ENCODE measurements at regions of chr14 and their contacts with region 1.

Region 1: GRCh38 chr14:22822571-22823098 is 7.1 kb upstream of the MRPL52 start:
- DNase-seq: peak; percentile 78
- ATAC-seq: peak; percentile 83
- H3K4me3 Mint-ChIP-seq: peak overlapping the region; percentile 59
- H3K27ac Mint-ChIP-seq: no peak overlapping the region
- H3K4me1 Mint-ChIP-seq: peaks cover 27% of the 10 kb centered on the region
- H3K27me3 Mint-ChIP-seq: peaks cover 13% of the 10 kb centered on the region
- CTCF ChIP-seq: peak; percentile 95

Region 2: DNA sequence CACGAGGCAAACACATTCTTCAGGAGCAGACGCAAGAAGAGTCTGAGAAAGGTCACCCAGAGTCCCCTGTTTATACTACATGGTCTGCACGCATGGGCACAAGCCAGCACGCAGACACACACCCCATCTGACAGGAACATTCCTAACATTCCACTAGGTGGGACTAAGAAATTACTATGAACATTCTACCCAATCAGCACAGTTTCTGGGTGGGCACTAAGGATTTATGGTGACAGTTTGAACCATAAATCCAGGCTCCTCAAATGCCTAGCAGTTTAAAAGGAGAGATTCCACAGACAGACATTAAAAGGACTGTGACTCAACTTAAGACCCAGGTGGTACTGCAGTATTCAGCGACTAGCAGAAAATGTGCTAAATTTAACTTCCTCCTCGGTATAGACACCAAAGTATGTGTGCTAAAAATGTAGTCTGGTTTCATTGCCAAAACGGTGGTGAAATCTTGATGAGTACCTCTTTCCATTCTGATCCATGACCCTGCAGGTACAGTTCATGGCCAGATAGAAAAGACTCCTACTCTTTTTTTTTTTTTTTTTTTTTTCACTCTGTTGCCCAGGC is 208.3 kb before region 1 on chr14:
- CTCF ChIA-PET with region 1: no interaction called
- POLR2A ChIA-PET with region 1: no interaction called
- intact Hi-C with region 1: no loop called
- DNase-seq: no peak
- ATAC-seq: no peak
- H3K4me3 Mint-ChIP-seq: no peak overlapping the region
- H3K27ac Mint-ChIP-seq: no peak overlapping the region
- H3K4me1 Mint-ChIP-seq: peaks cover 5% of the 10 kb centered on the region
- H3K27me3 Mint-ChIP-seq: no peaks in the 10 kb centered on the region
- CTCF ChIP-seq: no peak

Region 3: DNA sequence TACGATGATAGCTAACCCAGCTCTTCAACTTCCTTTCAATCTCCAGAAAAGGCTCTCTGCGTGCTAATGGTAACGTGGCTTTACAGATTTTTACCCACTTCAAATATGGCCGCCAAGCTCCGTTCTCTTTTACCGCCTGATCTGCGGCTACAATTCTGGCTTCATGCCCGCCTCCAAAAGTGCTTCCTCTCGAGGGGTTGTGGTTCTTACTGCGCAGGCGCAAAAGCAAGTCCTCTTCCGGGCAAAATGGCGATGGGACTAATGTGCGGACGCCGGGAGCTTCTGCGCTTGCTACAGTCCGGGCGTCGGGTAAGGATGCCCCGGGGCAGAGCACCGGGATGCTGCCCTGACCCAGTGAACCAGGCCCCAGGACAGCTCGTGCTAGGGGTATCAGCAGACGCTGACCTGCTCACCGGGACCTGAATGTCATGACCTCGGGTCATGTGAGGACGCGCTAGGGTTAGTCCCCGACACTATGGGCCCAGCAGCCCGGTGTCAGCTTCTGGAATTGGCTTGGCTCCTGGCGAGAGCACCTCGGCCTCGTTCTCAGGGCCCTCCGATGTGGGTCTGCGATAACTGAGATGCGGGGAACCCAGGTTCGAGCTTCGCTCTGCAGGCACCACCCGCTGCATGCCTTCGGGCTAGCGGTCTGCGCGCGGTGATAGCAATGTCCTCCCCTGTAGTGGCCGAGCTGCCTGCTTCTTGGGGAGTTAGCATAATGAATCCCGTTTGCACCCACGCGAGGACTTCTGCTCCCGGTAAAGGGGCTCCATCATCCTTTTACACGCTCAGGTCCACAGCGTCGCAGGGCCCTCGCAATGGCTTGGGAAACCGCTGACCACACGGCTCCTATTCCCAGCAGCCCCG is 55.9 kb before region 1 on chr14 and contains the start of gene OXA1L:
- CTCF ChIA-PET with region 1: interaction called, 15 read pairs
- POLR2A ChIA-PET with region 1: interaction called, 4 read pairs
- intact Hi-C with region 1: no loop called
- DNase-seq: peak; percentile 97
- ATAC-seq: peak; percentile 90
- H3K4me3 Mint-ChIP-seq: peak within 1 kb of the TSS; percentile 85
- H3K27ac Mint-ChIP-seq: peak within 1 kb of the TSS; percentile 98
- H3K4me1 Mint-ChIP-seq: peaks cover 26% of the 10 kb centered on the region
- H3K27me3 Mint-ChIP-seq: no peaks in the 10 kb centered on the region
- CTCF ChIP-seq: no peak
- total RNA-seq, gene OXA1L: 134 to 140 TPM

Region 4: DNA sequence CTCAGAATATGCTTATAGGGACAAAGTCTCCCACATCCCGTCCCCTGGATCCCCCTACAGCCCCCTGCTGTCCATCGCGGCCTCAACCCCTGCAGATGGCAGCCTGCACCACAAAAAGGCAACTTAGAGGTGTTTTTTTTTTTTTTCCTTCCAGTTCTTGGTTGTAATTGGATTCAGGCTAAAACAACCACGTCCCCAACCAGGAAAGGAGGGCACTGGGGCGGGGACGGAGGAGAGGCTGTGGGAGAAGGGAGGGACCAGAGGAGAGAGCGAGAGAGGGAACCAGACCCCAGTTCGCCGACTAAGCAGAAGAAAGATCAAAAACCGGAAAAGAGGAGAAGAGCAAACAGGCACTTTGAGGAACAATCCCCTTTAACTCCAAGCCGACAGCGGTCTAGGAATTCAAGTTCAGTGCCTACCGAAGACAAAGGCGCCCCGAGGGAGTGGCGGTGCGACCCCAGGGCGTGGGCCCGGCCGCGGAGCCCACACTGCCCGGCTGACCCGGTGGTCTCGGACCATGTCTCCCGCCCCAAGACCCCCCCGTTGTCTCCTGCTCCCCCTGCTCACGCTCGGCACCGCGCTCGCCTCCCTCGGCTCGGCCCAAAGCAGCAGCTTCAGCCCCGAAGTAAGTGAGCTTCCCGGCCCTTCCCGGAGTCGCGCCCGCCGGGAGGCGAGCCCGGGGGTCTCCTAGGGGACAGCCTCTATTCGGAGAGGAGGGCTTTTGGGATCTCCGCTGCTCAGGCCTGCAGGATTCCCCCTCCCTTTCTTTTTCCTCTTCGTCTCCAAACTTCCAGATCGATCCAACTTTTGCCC is 13.9 kb after region 1 on chr14 and contains the start of gene MMP14:
- CTCF ChIA-PET with region 1: interaction called, 20 read pairs
- POLR2A ChIA-PET with region 1: interaction called, 7 read pairs
- intact Hi-C with region 1: no loop called
- DNase-seq: no peak
- ATAC-seq: no peak
- H3K4me3 Mint-ChIP-seq: peak within 1 kb of the TSS; percentile 42
- H3K27ac Mint-ChIP-seq: no peak within 1 kb of the TSS
- H3K4me1 Mint-ChIP-seq: peaks cover 10% of the 10 kb centered on the region
- H3K27me3 Mint-ChIP-seq: peaks cover 13% of the 10 kb centered on the region
- CTCF ChIP-seq: no peak
- total RNA-seq, gene MMP14: 1.9 to 3.1 TPM